Activated T-helper 1 cell treated with anti-CD3 and anti-CD28 coated beads, Interleukin-12 subunit alpha, Interleukin-12 subunit beta, Interleukin-2, Interleukin-4 antibody, amounts not matched to agents 30 ng/mL and 10 ng/mL and 1 ng/mL, durations not matched to agents 14 hours and 24 hours and 36 hours (primary cell): ENCODE measurements at regions of chr20 and their contacts with region 1.

Region 1: GRCh38 chr20:46132705-46133120 is 14.6 kb downstream of the CD40 start:
- DNase-seq: peak; percentile 34
- H3K4me3 Mint-ChIP-seq: no peak overlapping the region
- H3K27ac Mint-ChIP-seq: no peak overlapping the region
- H3K4me1 Mint-ChIP-seq: no peaks in the 10 kb centered on the region
- H3K27me3 Mint-ChIP-seq: peaks cover 29% of the 10 kb centered on the region

Region 2: GRCh38 chr20:46151936-46152335 is 19.2 kb after region 1 on chr20:
- intact Hi-C with region 1: no loop called
- DNase-seq: no peak
- H3K4me3 Mint-ChIP-seq: no peak overlapping the region
- H3K27ac Mint-ChIP-seq: no peak overlapping the region
- H3K4me1 Mint-ChIP-seq: no peaks in the 10 kb centered on the region
- H3K27me3 Mint-ChIP-seq: peaks cover 5% of the 10 kb centered on the region

Region 3: DNA sequence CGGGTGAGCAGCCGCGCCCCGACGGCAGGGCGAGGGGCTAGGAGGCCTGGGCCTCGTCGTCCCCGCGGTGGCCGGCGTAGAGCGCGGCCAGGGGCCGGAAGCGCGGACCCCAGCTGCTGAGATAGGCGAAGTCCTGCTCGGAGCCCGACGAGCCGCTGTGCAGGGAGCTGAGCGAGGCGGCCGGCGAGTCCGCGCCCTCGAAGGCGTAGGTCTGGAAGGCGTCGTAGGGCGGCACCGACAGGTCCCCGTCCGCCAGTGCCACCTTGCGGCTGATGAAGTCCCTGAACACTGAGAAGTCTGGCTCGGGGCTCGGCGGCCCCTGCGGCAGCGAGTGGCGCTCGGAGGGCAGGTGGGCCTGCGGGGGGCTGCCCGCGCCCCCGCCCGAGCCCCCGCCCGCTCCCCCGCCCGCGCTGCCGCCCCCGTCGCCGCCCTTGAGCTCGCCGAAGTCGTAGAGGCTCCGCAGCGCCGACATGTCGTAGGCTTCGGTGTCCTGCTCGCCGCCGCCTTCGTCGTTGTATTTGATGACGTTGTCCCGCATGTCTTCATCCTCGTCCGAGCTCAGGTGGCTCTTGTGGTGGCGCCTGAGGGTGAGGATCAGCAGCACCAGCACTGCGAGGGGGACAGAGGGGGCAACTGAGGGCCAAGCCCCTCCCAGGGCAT is 41.9 kb after region 1 on chr20:
- intact Hi-C with region 1: loop called (anchors 1 kb)
- DNase-seq: peak; percentile 51
- H3K4me3 Mint-ChIP-seq: no peak overlapping the region
- H3K27ac Mint-ChIP-seq: no peak overlapping the region
- H3K4me1 Mint-ChIP-seq: no peaks in the 10 kb centered on the region
- H3K27me3 Mint-ChIP-seq: peaks cover 38% of the 10 kb centered on the region

Region 4: GRCh38 chr20:46349035-46349741 is 216.5 kb after region 1 on chr20:
- intact Hi-C with region 1: loop called (anchors 5 kb)
- DNase-seq: peak; percentile 22
- H3K4me3 Mint-ChIP-seq: no peak overlapping the region
- H3K27ac Mint-ChIP-seq: no peak overlapping the region
- H3K4me1 Mint-ChIP-seq: peaks cover 9% of the 10 kb centered on the region
- H3K27me3 Mint-ChIP-seq: no peaks in the 10 kb centered on the region

Region 5: DNA sequence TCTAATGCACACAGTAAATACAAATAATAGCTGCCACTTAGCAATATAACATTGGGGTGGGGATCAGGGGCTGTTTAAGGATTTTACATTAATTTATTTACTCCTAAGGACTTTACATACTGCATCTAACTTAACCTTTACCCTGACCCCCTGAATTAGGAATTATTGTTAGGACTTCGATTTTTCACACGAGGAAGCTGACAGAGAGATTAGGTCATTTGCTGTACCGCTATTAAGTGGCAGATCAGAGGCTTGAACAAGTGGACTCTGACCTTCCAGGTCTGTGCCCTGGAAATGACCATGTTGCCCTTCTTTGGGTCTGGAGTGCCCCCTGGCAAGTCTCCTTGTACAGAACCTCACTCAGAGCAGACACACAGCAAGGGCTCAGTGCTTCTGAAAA is 278.9 kb after region 1 on chr20:
- intact Hi-C with region 1: loop called (anchors 1 kb)
- DNase-seq: no peak
- H3K4me3 Mint-ChIP-seq: no peak overlapping the region
- H3K27ac Mint-ChIP-seq: no peak overlapping the region
- H3K4me1 Mint-ChIP-seq: peaks cover 29% of the 10 kb centered on the region
- H3K27me3 Mint-ChIP-seq: peaks cover 24% of the 10 kb centered on the region

Region 6: DNA sequence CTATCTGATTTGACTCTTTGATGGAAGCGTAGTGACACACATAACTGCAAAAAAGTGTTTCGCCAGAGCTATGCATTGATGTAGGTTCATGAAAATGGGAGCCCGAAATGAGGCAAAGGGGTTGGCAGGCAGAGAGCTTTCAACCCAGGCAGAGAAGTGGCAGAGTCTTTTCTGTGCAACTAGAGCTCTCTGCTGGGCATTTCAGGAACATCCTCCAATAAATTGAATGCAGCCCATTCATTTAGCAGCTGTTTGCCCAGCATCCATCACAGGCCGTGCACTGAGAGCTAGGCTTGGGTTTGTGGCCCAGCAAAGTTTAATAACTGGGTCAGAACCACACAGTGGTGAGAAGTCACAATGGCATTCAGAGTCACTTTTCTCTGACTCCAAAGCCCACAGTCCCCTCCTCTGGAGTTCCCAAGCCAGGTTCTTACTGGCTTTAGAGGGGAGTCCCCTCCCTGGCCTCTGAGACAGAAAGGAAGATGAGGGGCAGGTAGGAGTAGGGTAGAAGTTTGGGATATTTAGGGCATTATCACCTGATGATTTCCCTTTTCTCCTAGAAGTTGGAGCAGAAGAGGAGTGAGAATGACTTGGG is 305.5 kb after region 1 on chr20:
- intact Hi-C with region 1: loop called (anchors 1 kb)
- DNase-seq: no peak
- H3K4me3 Mint-ChIP-seq: no peak overlapping the region
- H3K27ac Mint-ChIP-seq: no peak overlapping the region
- H3K4me1 Mint-ChIP-seq: no peaks in the 10 kb centered on the region
- H3K27me3 Mint-ChIP-seq: peaks cover 27% of the 10 kb centered on the region